H1 (cell line): ENCODE measurements at regions of chr11 and their contacts with region 1.

Region 1: GRCh38 chr11:133531971-133532651 is at the start of gene OPCML:
- DNase-seq: peak in 1 of 2 experiments; percentile 60
- H3K4me3 ChIP-seq: peak within 1 kb of the TSS; percentile 64 to 72 (median 70)
- H3K27ac ChIP-seq: peak within 1 kb of the TSS; percentile 37; the same call in 1 of the 2 replicates
- H3K4me1 ChIP-seq: peaks cover 12 to 38% (median 21%) of the 10 kb centered on the region in 4 experiments
- H3K27me3 ChIP-seq: peaks cover 0 to 19% (median 14%) of the 10 kb centered on the region in 4 experiments; a peak in 4 of 7 replicates
- CTCF ChIP-seq: no peak
- EP300 ChIP-seq: no peak
- POLR2A ChIP-seq: no peak
- RAD21 ChIP-seq: peak; percentile 7 to 8; a peak in 1 of 4 replicates
- total RNA-seq, gene OPCML: 2.1 and 2.3 TPM in 2 replicates

Region 2: GRCh38 chr11:133508468-133508867 is 23.6 kb before region 1 on chr11:
- CTCF ChIA-PET with region 1: interaction called, 29 read pairs
- POLR2A ChIA-PET with region 1: interaction called, 4 read pairs
- DNase-seq: peak in 1 of 2 experiments; percentile 29
- H3K4me3 ChIP-seq: no peak overlapping the region
- H3K27ac ChIP-seq: no peak overlapping the region
- H3K4me1 ChIP-seq: peaks cover 4 to 27% (median 19%) of the 10 kb centered on the region in 4 experiments
- H3K27me3 ChIP-seq: peaks cover 0 to 7% (median 2%) of the 10 kb centered on the region in 4 experiments; a peak in 2 of 7 replicates
- CTCF ChIP-seq: no peak
- EP300 ChIP-seq: no peak
- POLR2A ChIP-seq: no peak
- RAD21 ChIP-seq: no peak

Region 3: DNA sequence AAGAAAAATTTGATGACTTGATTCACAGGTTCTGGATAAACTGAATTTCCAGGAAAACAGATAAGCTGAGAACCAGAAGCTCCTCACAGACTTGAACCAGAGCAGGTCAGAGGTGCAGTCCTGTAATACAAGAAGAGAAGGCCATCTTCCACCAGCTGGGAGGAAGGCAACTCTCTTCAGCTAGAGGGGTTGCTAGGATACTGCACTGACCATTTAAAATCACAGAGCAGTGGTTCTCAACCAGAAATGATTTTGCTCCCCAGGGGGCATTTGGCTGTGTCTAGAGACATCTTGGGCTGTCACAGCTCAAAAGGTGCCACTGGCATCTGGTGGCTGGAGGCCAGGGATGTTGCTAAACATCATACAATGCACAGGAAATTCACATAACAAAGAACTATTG is 17.0 kb before region 1 on chr11:
- CTCF ChIA-PET with region 1: interaction called, 29 read pairs
- POLR2A ChIA-PET with region 1: interaction called, 4 read pairs
- DNase-seq: no peak
- H3K4me3 ChIP-seq: no peak overlapping the region
- H3K27ac ChIP-seq: no peak overlapping the region
- H3K4me1 ChIP-seq: peaks cover 3 to 13% (median 9%) of the 10 kb centered on the region in 4 experiments; a peak in 6 of 7 replicates
- H3K27me3 ChIP-seq: peaks cover 0 to 5% (median 2%) of the 10 kb centered on the region in 4 experiments; a peak in 2 of 7 replicates
- CTCF ChIP-seq: no peak
- EP300 ChIP-seq: no peak
- POLR2A ChIP-seq: no peak
- RAD21 ChIP-seq: no peak